Activated T-helper 1 cell treated with anti-CD3 and anti-CD28 coated beads, Interleukin-12 subunit alpha, Interleukin-12 subunit beta, Interleukin-2, Interleukin-4 antibody, amounts not matched to agents 30 ng/mL and 10 ng/mL and 1 ng/mL, durations not matched to agents 14 hours and 24 hours and 36 hours (primary cell): ENCODE measurements at regions of chr19 and their contacts with region 1.

Region 1: GRCh38 chr19:48637170-48637947 is at the start of gene DBP:
- DNase-seq: peak; percentile 98
- H3K4me3 Mint-ChIP-seq: peak within 1 kb of the TSS; percentile 97
- H3K27ac Mint-ChIP-seq: peak within 1 kb of the TSS; percentile 100
- H3K4me1 Mint-ChIP-seq: peaks cover 29% of the 10 kb centered on the region
- H3K27me3 Mint-ChIP-seq: peaks cover 4% of the 10 kb centered on the region
- total RNA-seq, gene DBP: 8.5 and 9.1 TPM in 2 replicates

Region 2: GRCh38 chr19:48492925-48493717 is 144.2 kb before region 1 on chr19:
- intact Hi-C with region 1: no loop called
- DNase-seq: peak; percentile 82
- H3K4me3 Mint-ChIP-seq: peak overlapping the region; percentile 68
- H3K27ac Mint-ChIP-seq: peak overlapping the region; percentile 29
- H3K4me1 Mint-ChIP-seq: peaks cover 27% of the 10 kb centered on the region
- H3K27me3 Mint-ChIP-seq: peaks cover 21% of the 10 kb centered on the region

Region 3: DNA sequence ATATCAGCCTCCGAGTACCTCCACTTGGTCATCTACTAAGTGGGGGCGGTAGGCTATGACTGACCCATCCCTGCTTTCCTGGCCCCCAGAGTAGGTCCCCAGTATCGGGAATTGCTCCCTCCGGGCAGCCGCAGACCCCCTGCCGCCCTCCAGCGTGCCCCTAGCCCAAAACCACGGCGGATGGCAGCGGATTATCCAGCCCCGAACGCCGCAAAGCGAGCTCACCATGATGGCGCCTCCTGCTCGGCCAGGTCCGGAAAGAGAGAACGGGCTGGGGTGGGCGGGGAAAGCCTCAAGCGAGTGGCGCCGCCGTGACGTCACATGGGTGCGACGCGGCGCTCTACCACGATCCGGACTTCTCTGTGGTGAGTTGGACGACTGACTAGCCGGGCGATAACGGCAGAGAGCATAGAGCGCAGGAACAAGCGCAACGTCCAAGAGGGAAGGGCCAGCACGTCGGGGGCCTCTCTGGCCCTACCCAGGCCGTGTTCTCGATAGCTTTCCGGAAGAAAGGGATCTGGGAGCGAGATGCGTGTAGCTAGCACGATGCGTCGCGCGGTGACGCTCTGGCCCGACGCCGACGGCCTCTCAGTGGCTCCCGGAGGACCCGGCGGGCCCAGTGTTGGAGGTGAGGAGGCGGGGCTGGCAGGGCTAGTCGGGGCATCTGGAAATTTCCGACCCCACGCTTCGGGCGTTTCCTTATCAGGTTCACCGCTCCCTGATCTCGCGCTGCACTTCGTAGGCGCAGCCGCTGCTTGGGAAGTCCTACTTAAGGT is 18.3 kb before region 1 on chr19 and contains the starts of genes RPL18 and SPHK2:
- intact Hi-C with region 1: loop called (anchors 1 kb)
- DNase-seq: peak; percentile 94
- H3K4me3 Mint-ChIP-seq: peak within 1 kb of the TSS; percentile 99
- H3K27ac Mint-ChIP-seq: peak within 1 kb of the TSS; percentile 100
- H3K4me1 Mint-ChIP-seq: peaks cover 50% of the 10 kb centered on the region
- H3K27me3 Mint-ChIP-seq: no peaks in the 10 kb centered on the region
- total RNA-seq, gene RPL18: 1,774 and 1,780 TPM in 2 replicates
- total RNA-seq, gene SPHK2: 40.8 and 44.1 TPM in 2 replicates

Region 4: GRCh38 chr19:48624067-48624594 is 13.2 kb before region 1 on chr19:
- intact Hi-C with region 1: loop called (anchors 1 kb)
- DNase-seq: peak; percentile 97
- H3K4me3 Mint-ChIP-seq: peak overlapping the region; percentile 83
- H3K27ac Mint-ChIP-seq: peak overlapping the region; percentile 94
- H3K4me1 Mint-ChIP-seq: peaks cover 39% of the 10 kb centered on the region
- H3K27me3 Mint-ChIP-seq: no peaks in the 10 kb centered on the region